A549 (cell line): ENCODE measurements at regions of chr3 and their contacts with region 1.

Region 1: GRCh38 chr3:8416965-8417364 is 84.7 kb upstream of the LMCD1 start:
- DNase-seq: peak in 1 of 2 experiments; percentile 7
- ATAC-seq: peak; percentile 30 to 72; a peak in 3 of 6 replicates
- H3K4me3 ChIP-seq: no peak overlapping the region
- H3K27ac ChIP-seq: no peak overlapping the region
- H3K4me1 ChIP-seq: no peaks in the 10 kb centered on the region
- CTCF ChIP-seq: no peak
- EP300 ChIP-seq: no peak
- POLR2A ChIP-seq: no peak
- RAD21 ChIP-seq: no peak

Region 2: GRCh38 chr3:8166006-8166405 is 251.0 kb before region 1 on chr3:
- CTCF ChIA-PET with region 1: no interaction called
- POLR2A ChIA-PET with region 1: no interaction called
- DNase-seq: peak in 1 of 2 experiments; percentile 1
- ATAC-seq: peak; percentile 30 to 54; a peak in 3 of 6 replicates
- H3K4me3 ChIP-seq: no peak overlapping the region
- H3K27ac ChIP-seq: no peak overlapping the region
- H3K4me1 ChIP-seq: no peaks in the 10 kb centered on the region
- CTCF ChIP-seq: no peak
- EP300 ChIP-seq: no peak
- POLR2A ChIP-seq: no peak
- RAD21 ChIP-seq: no peak

Region 3: GRCh38 chr3:8324740-8325139 is 92.2 kb before region 1 on chr3:
- CTCF ChIA-PET with region 1: interaction called, 45 read pairs
- POLR2A ChIA-PET with region 1: no interaction called
- DNase-seq: peak; percentile 25 to 55
- ATAC-seq: peak; percentile 97 to 100
- H3K4me3 ChIP-seq: no peak overlapping the region
- H3K27ac ChIP-seq: no peak overlapping the region
- H3K4me1 ChIP-seq: 0 out of 3 replicates have a peak, but pooled peaks cover 7% of the 10 kb centered on the region
- CTCF ChIP-seq: peak; percentile 52
- EP300 ChIP-seq: no peak
- POLR2A ChIP-seq: no peak
- RAD21 ChIP-seq: peak; percentile 52 to 77

Region 4: DNA sequence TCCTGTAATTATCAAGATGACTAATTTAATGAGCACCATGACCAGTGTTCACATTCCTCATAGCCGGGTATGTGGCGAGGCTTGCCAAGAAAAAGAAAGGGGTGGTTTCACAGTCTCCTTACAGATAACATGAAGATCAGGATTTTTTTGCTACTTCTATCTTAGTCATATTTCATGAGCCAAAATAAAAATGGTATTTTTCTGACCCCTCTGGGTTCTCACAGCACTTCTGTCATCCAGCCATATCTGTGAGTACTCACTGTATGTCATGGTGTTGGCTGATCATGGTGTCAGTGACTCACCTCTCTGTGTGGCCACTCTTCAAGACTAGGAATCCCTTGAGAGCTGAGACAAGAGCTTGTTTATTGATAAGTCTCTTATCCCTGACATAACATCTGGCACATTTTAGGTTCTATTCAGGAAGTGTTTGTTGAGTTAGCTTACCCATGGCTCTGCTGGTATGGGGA is 45.8 kb before region 1 on chr3:
- CTCF ChIA-PET with region 1: no interaction called
- POLR2A ChIA-PET with region 1: no interaction called
- DNase-seq: peak in 1 of 2 experiments; percentile 4
- ATAC-seq: no peak; a peak in 1 of 6 replicates
- H3K4me3 ChIP-seq: no peak overlapping the region
- H3K27ac ChIP-seq: no peak overlapping the region
- H3K4me1 ChIP-seq: 0 out of 3 replicates have a peak, but pooled peaks cover 7% of the 10 kb centered on the region
- CTCF ChIP-seq: no peak
- EP300 ChIP-seq: no peak
- POLR2A ChIP-seq: no peak
- RAD21 ChIP-seq: no peak

Region 5: DNA sequence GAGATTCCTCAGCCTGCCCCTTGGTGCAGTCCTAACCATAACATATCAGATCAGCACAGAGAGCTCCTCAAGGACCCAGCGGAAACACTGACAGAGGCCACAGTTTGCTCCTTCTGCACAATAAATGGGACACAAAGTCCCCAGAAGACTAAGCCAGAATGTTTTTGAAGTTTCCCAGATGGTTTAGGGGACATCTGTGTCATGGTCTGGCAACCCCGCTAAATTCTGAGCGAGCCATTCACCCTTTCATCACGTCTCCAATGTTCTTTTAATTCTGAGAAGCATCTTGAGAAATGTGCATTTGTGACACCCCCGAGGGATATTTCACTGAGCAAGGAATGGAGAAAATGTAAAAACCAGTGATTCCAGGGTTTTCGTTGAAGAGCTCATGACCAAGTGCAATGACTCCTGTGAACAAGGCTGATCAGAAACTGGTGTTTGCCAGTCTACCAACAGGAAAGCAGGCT is 19.8 kb after region 1 on chr3:
- CTCF ChIA-PET with region 1: interaction called, 11 read pairs
- POLR2A ChIA-PET with region 1: no interaction called
- DNase-seq: no peak
- ATAC-seq: no peak
- H3K4me3 ChIP-seq: no peak overlapping the region
- H3K27ac ChIP-seq: no peak overlapping the region
- H3K4me1 ChIP-seq: peaks cover 6% of the 10 kb centered on the region; the same call in 2 of the 3 replicates
- CTCF ChIP-seq: no peak
- EP300 ChIP-seq: no peak
- POLR2A ChIP-seq: no peak
- RAD21 ChIP-seq: no peak

Region 6: GRCh38 chr3:8637348-8637747 is 220.4 kb after region 1 on chr3:
- CTCF ChIA-PET with region 1: no interaction called
- POLR2A ChIA-PET with region 1: no interaction called
- DNase-seq: no peak
- ATAC-seq: no peak
- H3K4me3 ChIP-seq: no peak overlapping the region
- H3K27ac ChIP-seq: no peak overlapping the region
- H3K4me1 ChIP-seq: peaks cover 5% of the 10 kb centered on the region; the same call in 2 of the 3 replicates
- CTCF ChIP-seq: no peak
- EP300 ChIP-seq: no peak
- POLR2A ChIP-seq: no peak
- RAD21 ChIP-seq: no peak